ENCODE measurements at regions of chr15 and their contacts with region 1.

Region 1: DNA sequence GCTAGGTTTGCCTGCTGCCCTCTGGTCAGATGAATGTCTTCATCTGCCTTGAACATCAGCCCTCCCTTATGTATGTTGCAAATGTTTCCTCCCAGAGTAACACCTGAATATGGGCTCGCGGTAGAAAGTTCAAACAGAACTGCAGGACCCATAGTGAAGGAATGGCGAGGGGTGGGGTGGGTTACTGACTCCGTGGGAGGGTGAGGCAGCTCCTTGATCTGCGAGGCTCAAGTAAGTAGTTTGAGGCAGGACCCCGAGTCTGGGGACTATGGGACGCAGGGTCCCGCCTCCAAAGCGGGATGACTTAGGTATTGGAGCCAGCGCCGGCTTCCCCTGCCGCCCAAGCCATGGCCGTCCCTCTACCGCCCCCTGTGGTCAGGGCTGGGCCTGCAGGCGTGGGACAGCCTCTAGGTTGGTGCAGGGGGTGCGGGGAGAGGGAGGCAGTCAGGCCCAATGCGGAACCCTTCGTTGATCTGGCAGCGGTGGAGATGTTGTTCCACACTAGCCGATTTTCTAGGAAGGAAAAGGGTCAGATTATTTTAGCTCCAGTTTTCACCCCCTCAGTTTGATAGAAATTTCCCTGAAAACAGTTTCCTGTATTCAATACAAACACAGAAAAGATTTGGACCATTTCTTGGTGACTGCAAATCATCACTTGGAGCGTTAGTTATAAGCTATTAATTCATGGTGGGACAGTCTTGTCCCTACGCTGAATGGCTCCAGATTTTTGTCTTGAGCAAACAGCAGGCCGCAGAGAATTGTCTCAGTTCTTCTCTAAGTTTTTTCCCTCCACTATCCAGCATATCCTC is 72.3 kb downstream of the CORO2B start:
- DNase-seq: peak; percentile 18
- ATAC-seq: peak; percentile 97
- H3K4me3 ChIP-seq: no peak overlapping the region
- H3K27ac ChIP-seq: no peak overlapping the region
- H3K4me1 ChIP-seq: no peaks in the 10 kb centered on the region
- H3K27me3 ChIP-seq: peaks cover 0 to 23% of the 10 kb centered on the region in 2 experiments; a peak in 1 of 5 replicates
- CTCF ChIP-seq: peak; percentile 85
- EP300 ChIP-seq: no peak
- POLR2A ChIP-seq: no peak
- RAD21 ChIP-seq: peak; percentile 69

Region 2: DNA sequence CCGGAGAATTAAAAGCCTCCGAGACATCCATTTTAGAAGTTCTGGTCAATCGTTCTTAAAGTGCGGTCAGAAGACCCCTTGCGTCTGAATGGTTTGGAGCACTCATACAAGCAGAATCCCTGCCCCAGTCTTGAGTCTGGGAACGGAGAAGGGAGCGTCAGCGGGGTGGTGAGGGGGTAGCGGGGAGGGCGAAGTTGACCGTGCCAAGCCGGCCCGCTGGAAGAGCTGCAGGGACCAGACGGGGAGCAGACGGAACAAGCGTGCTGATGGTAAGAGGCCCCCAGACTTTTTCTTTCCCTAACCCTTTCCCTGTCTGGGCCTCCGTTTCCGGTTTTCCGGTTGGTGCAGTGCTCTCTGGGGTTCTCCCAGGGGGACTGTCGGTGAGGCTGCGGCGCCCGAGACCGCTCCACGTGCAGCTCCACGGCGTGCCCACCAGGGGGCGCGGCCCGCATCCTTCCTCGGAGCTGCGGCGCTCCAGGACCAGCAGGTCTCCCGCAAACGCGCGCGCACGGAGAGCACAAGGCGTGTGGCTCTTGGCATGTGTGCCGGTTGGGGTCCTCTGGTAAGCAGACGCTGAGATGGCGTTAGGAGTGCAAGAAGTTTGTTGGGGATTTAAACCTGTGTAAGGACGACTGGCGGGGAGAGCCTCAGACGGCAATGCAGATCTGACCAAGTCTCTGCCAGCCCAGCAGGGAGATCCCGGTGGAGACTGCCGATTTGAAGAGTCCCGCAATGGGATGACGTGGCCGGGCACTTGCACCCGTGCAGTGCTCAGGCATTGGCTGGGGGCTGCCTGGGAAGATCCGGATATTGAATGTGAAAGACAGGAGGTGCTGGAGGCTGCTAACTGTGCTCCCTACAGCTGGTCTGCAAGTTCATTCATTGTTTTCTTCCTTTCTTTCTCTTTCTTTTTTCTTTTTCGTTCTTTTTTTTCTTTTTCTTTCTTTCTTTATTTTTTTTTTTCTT is 91.5 kb before region 1 on chr15:
- CTCF ChIA-PET with region 1: interaction called, 24 read pairs
- POLR2A ChIA-PET with region 1: no interaction called
- in situ Hi-C with region 1: no loop called
- intact Hi-C with region 1: no loop called
- DNase-seq: peak; percentile 33
- ATAC-seq: peak; percentile 93
- H3K4me3 ChIP-seq: no peak overlapping the region
- H3K27ac ChIP-seq: no peak overlapping the region
- H3K4me1 ChIP-seq: peaks cover 4% of the 10 kb centered on the region; the same call in 1 of the 2 replicates
- H3K27me3 ChIP-seq: peaks cover 3 to 12% of the 10 kb centered on the region in 2 experiments; a peak in 2 of 5 replicates
- CTCF ChIP-seq: peak; percentile 96
- EP300 ChIP-seq: no peak
- POLR2A ChIP-seq: no peak
- RAD21 ChIP-seq: peak; percentile 74

Measured in HepG2 (cell line).